CD8-positive, alpha-beta memory T cell (primary cell): ENCODE measurements at regions of chr7 and their contacts with region 1.

Region 1: DNA sequence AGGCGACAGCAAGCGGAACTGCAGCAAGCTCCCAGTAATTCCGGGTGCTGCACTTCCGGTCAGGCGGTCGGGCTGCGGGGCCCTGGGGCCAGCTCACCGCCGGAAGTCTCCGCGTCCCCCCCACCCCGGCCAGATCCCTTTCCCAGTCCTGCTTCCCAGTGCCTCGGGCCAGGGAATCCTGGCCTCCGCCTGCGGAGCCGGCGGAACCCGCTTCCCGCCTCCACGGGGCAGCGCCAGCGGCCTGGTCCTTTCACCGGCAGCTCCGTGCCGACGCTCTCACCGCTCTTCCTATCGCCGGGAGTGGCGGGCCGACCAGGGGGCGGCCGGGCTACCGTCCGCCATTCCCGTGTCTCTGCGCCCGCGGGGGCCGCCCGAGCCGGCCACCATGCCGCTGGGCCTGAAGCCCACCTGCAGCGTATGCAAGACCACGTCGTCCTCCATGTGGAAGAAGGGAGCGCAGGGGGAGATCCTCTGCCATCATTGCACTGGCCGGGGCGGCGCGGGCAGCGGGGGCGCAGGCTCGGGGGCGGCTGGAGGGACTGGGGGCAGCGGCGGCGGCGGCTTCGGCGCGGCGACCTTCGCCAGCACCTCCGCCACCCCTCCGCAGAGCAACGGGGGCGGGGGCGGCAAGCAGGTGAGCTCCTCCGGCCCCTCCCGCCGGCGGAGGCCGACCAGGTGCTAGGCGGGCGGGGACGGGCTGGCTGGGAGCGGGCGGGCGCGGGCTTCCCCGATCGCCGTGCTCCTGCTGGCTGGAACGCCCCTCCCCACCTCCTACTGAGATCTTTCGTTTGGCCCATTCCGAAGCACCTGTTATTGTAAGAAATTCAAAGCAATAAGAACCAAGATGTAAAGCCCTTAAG is at the start of gene GATAD1:
- DNase-seq: peak; percentile 68 to 88 (median 83)
- H3K4me3 ChIP-seq: peak within 1 kb of the TSS; percentile 91
- H3K4me3 Mint-ChIP-seq: peak within 1 kb of the TSS; percentile 91 to 99 (median 96)
- H3K27ac ChIP-seq: peak within 1 kb of the TSS; percentile 93
- H3K27ac Mint-ChIP-seq: peak within 1 kb of the TSS; percentile 96 to 99 (median 98)
- H3K4me1 ChIP-seq: peaks cover 14% of the 10 kb centered on the region
- H3K4me1 Mint-ChIP-seq: peaks cover 12 to 37% (median 20%) of the 10 kb centered on the region in 3 donors
- H3K27me3 ChIP-seq: no peaks in the 10 kb centered on the region
- H3K27me3 Mint-ChIP-seq: no peaks in the 10 kb centered on the region
- total RNA-seq, gene GATAD1: 18.3 to 18.9 TPM

Region 2: DNA sequence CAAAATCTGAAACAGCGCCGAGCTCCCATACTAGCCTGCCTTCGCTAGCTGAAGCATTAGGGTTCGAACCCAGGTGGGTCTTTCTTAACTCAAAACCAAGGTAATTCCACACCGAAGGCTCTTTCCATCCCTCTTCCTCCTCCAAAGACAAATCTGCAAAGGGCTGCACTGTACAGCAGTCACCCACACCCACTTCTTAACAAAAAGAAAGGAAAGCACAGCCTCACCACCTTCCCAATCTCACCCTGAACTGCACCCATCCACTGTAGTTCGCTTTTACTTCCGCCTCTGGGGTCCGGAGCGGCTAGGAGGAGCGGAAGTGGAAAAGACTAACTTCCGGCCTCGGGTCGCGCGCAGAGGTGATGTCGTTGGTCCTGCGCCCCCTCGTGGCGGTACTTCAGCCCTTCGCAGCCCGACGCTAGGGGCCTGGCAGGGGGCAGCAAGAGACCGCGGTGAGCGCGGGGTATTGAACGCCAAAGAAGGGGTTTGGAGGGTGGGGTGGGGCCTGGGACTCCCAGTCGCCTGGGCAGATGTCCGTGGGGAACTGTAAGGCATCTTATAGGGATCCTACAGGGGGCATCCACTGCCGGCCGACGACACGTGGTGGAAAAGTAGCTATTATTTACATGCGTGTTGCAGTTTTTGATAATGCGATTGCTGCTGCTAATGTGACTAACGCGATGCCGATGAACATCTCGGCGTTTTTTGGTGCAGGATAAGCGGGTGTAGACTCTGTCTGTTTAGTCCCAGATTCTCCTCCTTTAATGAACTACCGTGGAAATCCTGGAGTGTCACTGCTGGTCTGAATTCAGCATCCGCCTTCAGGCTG is 566.9 kb before region 1 on chr7 and contains the start of gene MTERF1:
- CTCF ChIA-PET with region 1: interaction called, 12 read pairs
- POLR2A ChIA-PET with region 1: interaction called, 9 read pairs
- DNase-seq: peak; percentile 88 to 93 (median 89)
- H3K4me3 ChIP-seq: peak within 1 kb of the TSS; percentile 98
- H3K4me3 Mint-ChIP-seq: peak within 1 kb of the TSS; percentile 93 to 99 (median 95)
- H3K27ac ChIP-seq: peak within 1 kb of the TSS; percentile 72
- H3K27ac Mint-ChIP-seq: peak within 1 kb of the TSS; percentile 53 to 98 (median 96)
- H3K4me1 ChIP-seq: peaks cover 20% of the 10 kb centered on the region
- H3K4me1 Mint-ChIP-seq: peaks cover 37 to 50% (median 50%) of the 10 kb centered on the region in 3 donors
- H3K27me3 ChIP-seq: no peaks in the 10 kb centered on the region
- H3K27me3 Mint-ChIP-seq: no peaks in the 10 kb centered on the region
- total RNA-seq, gene MTERF1: 20.4 to 21.4 TPM

Region 3: DNA sequence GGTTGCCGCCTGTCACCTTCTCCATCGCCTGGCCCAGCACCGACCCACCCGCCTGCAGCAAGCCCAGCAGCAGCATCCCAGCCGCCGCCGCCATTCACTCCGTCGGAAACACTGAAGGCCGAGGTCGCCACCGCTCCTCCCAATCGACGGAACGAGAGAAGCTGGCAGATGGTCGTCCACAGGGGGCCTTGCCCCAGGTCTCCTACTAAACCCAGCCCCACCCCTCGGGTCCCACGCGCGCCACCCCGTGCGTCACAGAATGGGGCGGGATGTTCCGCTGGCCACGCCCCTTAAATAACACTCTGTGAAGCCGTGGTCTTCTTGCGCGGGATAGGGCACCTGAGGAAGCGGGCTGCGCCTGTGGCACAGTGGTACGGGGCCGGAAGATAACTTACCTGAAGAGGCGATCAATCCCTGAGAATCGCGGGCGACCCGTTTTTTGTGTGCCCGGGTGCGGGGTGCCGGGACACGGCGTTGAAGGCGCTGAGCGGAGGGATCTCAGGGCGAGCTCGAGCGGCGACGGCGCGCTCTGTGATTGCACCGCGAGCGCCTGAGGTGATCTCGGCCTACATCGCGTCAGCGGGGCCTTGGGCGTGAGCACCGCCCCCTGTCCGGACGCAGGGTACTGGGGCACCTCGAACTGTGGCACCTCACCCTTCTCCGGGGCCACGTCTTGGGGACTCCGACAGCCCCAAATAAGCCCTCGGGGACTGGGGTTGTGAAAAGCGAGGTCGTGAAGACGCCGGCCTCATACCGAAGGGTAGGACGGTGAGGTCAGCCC is 313.1 kb before region 1 on chr7 and contains the start of gene CYP51A1:
- CTCF ChIA-PET with region 1: interaction called, 10 read pairs
- POLR2A ChIA-PET with region 1: interaction called, 14 read pairs
- DNase-seq: peak; percentile 89 to 97 (median 95)
- H3K4me3 ChIP-seq: peak within 1 kb of the TSS; percentile 89
- H3K4me3 Mint-ChIP-seq: peak within 1 kb of the TSS; percentile 94 to 100 (median 98)
- H3K27ac ChIP-seq: peak within 1 kb of the TSS; percentile 95
- H3K27ac Mint-ChIP-seq: peak within 1 kb of the TSS; percentile 96 to 100 (median 99)
- H3K4me1 ChIP-seq: peaks cover 7% of the 10 kb centered on the region
- H3K4me1 Mint-ChIP-seq: peaks cover 31 to 39% (median 37%) of the 10 kb centered on the region in 3 donors
- H3K27me3 ChIP-seq: no peaks in the 10 kb centered on the region
- H3K27me3 Mint-ChIP-seq: peaks cover 0 to 11% of the 10 kb centered on the region in 2 donors
- total RNA-seq, gene CYP51A1: 44.5 TPM

Region 4: GRCh38 chr7:92295391-92295790 is 152.2 kb before region 1 on chr7:
- CTCF ChIA-PET with region 1: no interaction called
- POLR2A ChIA-PET with region 1: no interaction called
- DNase-seq: no peak
- H3K4me3 ChIP-seq: no peak overlapping the region
- H3K4me3 Mint-ChIP-seq: no peak overlapping the region
- H3K27ac ChIP-seq: no peak overlapping the region
- H3K27ac Mint-ChIP-seq: no peak overlapping the region
- H3K4me1 ChIP-seq: no peaks in the 10 kb centered on the region
- H3K4me1 Mint-ChIP-seq: peaks cover 20 to 33% (median 32%) of the 10 kb centered on the region in 3 donors
- H3K27me3 ChIP-seq: no peaks in the 10 kb centered on the region
- H3K27me3 Mint-ChIP-seq: no peaks in the 10 kb centered on the region

Region 5: GRCh38 chr7:92421676-92422435 is 25.7 kb before region 1 on chr7:
- CTCF ChIA-PET with region 1: interaction called, 107 read pairs
- POLR2A ChIA-PET with region 1: interaction called, 17 read pairs
- DNase-seq: no peak
- H3K4me3 ChIP-seq: no peak overlapping the region
- H3K4me3 Mint-ChIP-seq: no peak overlapping the region
- H3K27ac ChIP-seq: no peak overlapping the region
- H3K27ac Mint-ChIP-seq: no peak overlapping the region
- H3K4me1 ChIP-seq: peaks cover 7% of the 10 kb centered on the region
- H3K4me1 Mint-ChIP-seq: peaks cover 9 to 11% (median 10%) of the 10 kb centered on the region in 3 donors
- H3K27me3 ChIP-seq: no peaks in the 10 kb centered on the region
- H3K27me3 Mint-ChIP-seq: peaks cover 11 to 16% of the 10 kb centered on the region in 2 donors

Region 6: DNA sequence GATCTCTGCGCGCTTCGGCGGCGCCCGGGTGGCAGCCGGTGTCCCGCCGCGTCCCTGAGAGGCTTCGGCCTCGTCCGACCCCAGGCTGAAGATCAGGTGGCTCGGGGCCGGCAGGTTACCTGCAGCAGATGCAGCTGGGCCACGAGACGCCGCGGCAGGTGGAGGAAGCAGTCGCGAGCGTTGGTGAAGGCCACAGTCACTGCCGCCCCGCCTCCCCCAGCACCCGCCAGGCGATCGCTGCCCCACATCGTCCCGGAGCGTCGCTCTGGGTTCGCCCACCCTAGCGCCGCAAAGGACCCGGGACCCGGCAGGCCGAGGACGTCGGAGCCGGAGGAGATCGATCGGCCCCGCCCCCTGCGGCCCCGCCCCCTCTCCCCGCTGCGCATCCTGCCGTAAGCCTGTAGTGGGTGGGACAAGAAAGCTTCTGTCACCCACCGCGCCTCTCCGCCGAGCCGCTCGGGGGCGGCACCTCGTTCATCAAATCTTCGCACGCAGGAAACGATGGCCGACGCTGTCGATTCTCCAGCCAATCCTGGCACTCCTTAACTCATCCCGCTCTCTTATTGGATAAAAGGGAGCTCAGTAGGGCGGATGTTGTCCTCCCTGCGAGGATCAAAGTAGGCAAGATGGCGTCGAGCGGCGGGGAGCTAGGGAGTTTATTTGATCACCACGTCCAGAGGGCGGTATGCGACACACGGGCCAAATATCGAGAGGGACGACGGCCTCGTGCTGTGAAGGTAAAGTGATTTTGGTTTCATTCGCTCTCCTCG is 80.8 kb after region 1 on chr7 and contains the starts of genes PEX1 and RBM48:
- CTCF ChIA-PET with region 1: interaction called, 19 read pairs
- POLR2A ChIA-PET with region 1: interaction called, 32 read pairs
- DNase-seq: peak; percentile 94 to 98 (median 96)
- H3K4me3 ChIP-seq: peak within 1 kb of the TSS; percentile 99
- H3K4me3 Mint-ChIP-seq: peak within 1 kb of the TSS; percentile 86 to 97 (median 89)
- H3K27ac ChIP-seq: peak within 1 kb of the TSS; percentile 97
- H3K27ac Mint-ChIP-seq: peak within 1 kb of the TSS; percentile 87 to 100 (median 96)
- H3K4me1 ChIP-seq: peaks cover 17% of the 10 kb centered on the region
- H3K4me1 Mint-ChIP-seq: peaks cover 39 to 58% (median 56%) of the 10 kb centered on the region in 3 donors
- H3K27me3 ChIP-seq: no peaks in the 10 kb centered on the region
- H3K27me3 Mint-ChIP-seq: peaks cover 0 to 3% of the 10 kb centered on the region in 2 donors
- total RNA-seq, gene PEX1: 17.8 to 18.0 TPM
- total RNA-seq, gene RBM48: 15.7 to 18.0 TPM